Ascending aorta (tissue), 2 donors: ENCODE measurements at regions of chr11 and their contacts with region 1.

Region 1: GRCh38 chr11:108871152-108871551 is 206.3 kb downstream of the DDX10 start:
- DNase-seq: no peak
- H3K4me3 ChIP-seq: no peak overlapping the region
- H3K27ac ChIP-seq: peak overlapping the region; percentile 51 to 62
- H3K4me1 ChIP-seq: peaks cover 4% of the 10 kb centered on the region in 2 donors
- H3K27me3 ChIP-seq: no peaks in the 10 kb centered on the region
- CTCF ChIP-seq: peak; percentile 6 to 61 (median 33)

Region 2: DNA sequence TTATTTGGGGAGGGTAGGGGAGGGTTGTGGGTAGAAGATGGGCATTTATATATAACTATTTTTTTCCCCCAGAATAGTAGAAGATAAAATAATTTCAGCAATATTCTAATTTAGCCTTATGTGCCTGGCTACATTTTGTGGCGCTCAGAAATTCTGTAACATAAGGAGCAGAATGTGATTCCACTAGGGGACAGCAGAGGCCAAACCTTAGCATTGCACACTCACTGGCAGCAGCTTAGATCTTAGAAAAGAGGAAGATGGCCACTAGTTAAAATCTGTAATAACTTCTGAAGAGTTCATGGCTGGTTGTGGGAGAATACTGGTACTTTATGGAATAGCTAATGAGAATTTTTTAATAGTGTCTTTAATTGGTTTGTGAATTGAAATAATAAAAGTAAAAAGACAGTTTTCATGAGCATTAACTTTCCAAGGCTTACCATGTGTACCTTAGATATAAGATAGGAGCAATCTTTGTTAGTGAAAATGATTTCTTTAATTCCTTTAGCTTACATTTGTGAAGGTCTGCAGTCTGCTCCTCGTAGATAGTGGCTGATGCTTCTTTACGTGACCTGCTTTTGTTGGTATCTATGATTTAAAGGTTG is 173.2 kb before region 1 on chr11:
- intact Hi-C with region 1: loop called (anchors 2 kb)
- DNase-seq: peak in 1 of 2 donors; percentile 68
- H3K4me3 ChIP-seq: no peak overlapping the region
- H3K27ac ChIP-seq: no peak overlapping the region
- H3K4me1 ChIP-seq: no peaks in the 10 kb centered on the region
- H3K27me3 ChIP-seq: no peaks in the 10 kb centered on the region
- CTCF ChIP-seq: peak; percentile 60 to 89 (median 79)